ENCODE measurements at regions of chr12 and their contacts with region 1.

Region 1: DNA sequence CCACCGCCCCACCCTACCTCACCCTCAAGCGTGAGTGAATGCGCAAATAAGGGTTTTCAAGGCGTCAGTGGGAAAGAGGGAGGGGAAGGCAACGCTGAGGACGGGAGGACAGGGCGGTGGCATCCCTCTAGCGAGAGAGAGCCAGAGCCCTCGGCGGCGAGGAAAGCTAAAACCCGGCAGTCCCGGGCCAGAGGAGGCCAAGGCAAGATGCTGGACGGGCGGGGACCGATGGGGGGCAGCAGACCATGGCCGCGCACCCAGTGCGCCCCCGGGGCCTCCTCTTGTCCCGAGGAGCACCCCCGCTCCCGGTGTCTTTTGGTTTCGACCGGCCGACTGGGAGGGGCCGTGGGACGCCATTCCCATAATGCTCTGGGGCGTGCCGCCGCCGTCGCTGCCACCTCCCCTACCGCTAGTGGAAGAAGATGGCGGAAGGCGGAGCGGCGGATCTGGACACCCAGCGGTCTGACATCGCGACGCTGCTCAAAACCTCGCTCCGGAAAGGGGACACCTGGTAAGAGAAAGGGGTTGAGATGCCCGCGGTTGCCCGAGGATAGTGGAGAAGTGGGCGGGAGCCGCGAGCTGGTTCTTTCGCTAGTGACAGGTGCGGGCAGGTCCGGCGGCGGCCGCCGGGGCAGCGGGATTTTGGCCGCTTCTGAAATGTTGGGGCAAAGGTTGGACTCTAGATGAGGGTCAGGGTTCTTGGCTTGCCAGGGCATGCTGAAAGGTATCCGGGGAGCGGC is at the start of gene USP15:
- DNase-seq: peak; percentile 73
- ATAC-seq: peak; percentile 85
- H3K4me3 ChIP-seq: peak within 1 kb of the TSS; percentile 99
- H3K27ac ChIP-seq: peak within 1 kb of the TSS; percentile 90
- H3K4me1 ChIP-seq: peaks cover 8% of the 10 kb centered on the region
- H3K27me3 ChIP-seq: no peaks in the 10 kb centered on the region
- CTCF ChIP-seq: peak; percentile 54 to 70 (median 64)
- EP300 ChIP-seq: peak; percentile 15 to 67; a peak in 2 of 4 replicates
- POLR2A ChIP-seq: peak; percentile 96
- RAD21 ChIP-seq: peak; percentile 18; the same call in 1 of the 2 replicates
- polyA plus RNA-seq, gene USP15: 89.1 to 101 TPM

Region 2: GRCh38 chr12:62301080-62301798 is 41.1 kb after region 1 on chr12:
- CTCF ChIA-PET with region 1: no interaction called
- POLR2A ChIA-PET with region 1: no interaction called
- RAD21 ChIA-PET with region 1: interaction called, 3 read pairs
- SMC1A ChIA-PET with region 1: no interaction called
- in situ Hi-C with region 1: no loop called
- intact Hi-C with region 1: loop called (anchors 5 kb)
- DNase-seq: no peak
- ATAC-seq: peak; percentile 80
- H3K4me3 ChIP-seq: no peak overlapping the region
- H3K27ac ChIP-seq: 0 out of 2 replicates have a peak overlapping the region, but pooled peaks have one; percentile 32
- H3K4me1 ChIP-seq: no peaks in the 10 kb centered on the region
- H3K27me3 ChIP-seq: no peaks in the 10 kb centered on the region
- CTCF ChIP-seq: no peak
- EP300 ChIP-seq: no peak
- POLR2A ChIP-seq: no peak
- RAD21 ChIP-seq: no peak

Region 3: DNA sequence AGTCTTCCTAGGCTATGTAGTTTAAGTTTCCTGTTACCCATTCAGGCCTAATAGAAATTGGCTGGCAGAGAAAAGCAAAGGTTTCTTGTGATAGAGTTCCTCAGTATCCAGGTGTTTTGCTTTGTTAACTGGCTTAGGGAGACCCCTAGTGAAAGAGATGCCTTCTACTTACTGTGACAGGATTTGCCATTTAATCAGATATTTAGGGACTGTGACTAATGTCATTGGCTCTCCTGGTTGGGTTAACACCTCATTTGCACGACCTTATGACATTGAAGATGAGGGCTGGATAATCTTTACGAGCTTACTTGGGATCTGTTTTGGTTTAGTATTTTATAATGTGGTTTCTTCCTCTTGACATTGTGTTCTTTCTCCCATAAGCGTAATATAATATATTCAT is 212.3 kb after region 1 on chr12:
- CTCF ChIA-PET with region 1: no interaction called
- POLR2A ChIA-PET with region 1: no interaction called
- RAD21 ChIA-PET with region 1: interaction called, 4 read pairs
- SMC1A ChIA-PET with region 1: no interaction called
- in situ Hi-C with region 1: no loop called
- intact Hi-C with region 1: loop called (anchors 10 kb)
- DNase-seq: no peak
- ATAC-seq: no peak; the same call in 2 of the 3 replicates
- H3K4me3 ChIP-seq: no peak overlapping the region
- H3K27ac ChIP-seq: no peak overlapping the region
- H3K4me1 ChIP-seq: no peaks in the 10 kb centered on the region
- H3K27me3 ChIP-seq: no peaks in the 10 kb centered on the region
- CTCF ChIP-seq: no peak
- EP300 ChIP-seq: no peak
- POLR2A ChIP-seq: no peak
- RAD21 ChIP-seq: no peak